ENCODE measurements at regions of chr9 and their contacts with region 1.

Region 1: DNA sequence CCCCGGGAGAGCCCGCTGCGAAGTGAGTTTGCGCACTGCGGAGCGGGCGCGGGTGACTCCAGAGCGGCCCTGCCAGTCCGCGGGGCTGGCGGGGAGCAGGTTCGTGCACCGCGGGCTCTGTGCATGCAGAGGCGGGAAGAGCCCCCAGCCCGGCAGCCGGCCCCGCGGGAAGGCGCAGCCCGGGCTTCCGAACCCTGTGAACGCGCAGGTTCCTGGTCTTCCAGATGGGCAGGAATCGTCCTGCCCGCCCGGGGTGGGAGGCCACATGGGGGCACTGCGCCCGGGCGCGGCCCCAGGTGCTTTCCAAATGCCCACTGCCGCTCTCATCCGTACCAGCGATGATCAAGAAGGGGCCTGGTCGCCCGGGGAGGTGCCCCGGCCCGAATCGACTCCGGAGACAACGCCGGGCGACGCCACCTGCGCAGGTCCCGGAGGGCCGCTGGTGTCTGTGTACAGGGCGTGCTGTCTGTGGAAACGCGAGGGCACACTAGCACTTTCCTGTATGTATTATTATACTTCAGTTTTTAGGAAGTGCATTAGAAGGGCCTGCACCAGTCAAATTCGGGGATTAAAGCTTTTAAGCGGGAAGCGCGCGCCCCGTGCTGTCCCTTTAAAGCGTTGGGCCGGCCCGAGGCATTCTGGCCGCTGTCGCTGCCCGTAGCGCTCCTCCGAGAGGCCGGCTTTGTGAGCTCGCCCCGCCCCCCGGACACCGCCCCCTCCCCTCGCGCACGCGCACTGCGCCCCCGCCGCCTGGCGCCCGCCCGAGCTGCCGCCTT is at the start of gene WDR5:
- DNase-seq: peak; percentile 93
- H3K4me3 Mint-ChIP-seq: peak within 1 kb of the TSS; percentile 96
- H3K27ac Mint-ChIP-seq: peak within 1 kb of the TSS; percentile 92
- H3K4me1 Mint-ChIP-seq: peaks cover 32% of the 10 kb centered on the region
- H3K27me3 Mint-ChIP-seq: no peaks in the 10 kb centered on the region
- total RNA-seq, gene WDR5: 41.6 to 43.0 TPM

Region 2: GRCh38 chr9:133683586-133684120 is 451.9 kb before region 1 on chr9:
- CTCF ChIA-PET with region 1: no interaction called
- POLR2A ChIA-PET with region 1: no interaction called
- intact Hi-C with region 1: no loop called
- DNase-seq: peak; percentile 77
- H3K4me3 Mint-ChIP-seq: peak overlapping the region; percentile 63
- H3K27ac Mint-ChIP-seq: peak overlapping the region; percentile 91
- H3K4me1 Mint-ChIP-seq: peaks cover 23% of the 10 kb centered on the region
- H3K27me3 Mint-ChIP-seq: no peaks in the 10 kb centered on the region

Region 3: GRCh38 chr9:134024828-134025605 is 110.5 kb before region 1 on chr9 and contains the start of gene BRD3OS:
- CTCF ChIA-PET with region 1: no interaction called
- POLR2A ChIA-PET with region 1: no interaction called
- intact Hi-C with region 1: loop called (anchors 1 kb)
- DNase-seq: peak; percentile 94
- H3K4me3 Mint-ChIP-seq: peak within 1 kb of the TSS; percentile 76
- H3K27ac Mint-ChIP-seq: peak within 1 kb of the TSS; percentile 33
- H3K4me1 Mint-ChIP-seq: peaks cover 12% of the 10 kb centered on the region
- H3K27me3 Mint-ChIP-seq: no peaks in the 10 kb centered on the region
- total RNA-seq, gene BRD3OS: 12.6 to 13.2 TPM